Right lobe of liver (tissue), 6 donors: ENCODE measurements at regions of chr16 and their contacts with region 1.

Region 1: DNA sequence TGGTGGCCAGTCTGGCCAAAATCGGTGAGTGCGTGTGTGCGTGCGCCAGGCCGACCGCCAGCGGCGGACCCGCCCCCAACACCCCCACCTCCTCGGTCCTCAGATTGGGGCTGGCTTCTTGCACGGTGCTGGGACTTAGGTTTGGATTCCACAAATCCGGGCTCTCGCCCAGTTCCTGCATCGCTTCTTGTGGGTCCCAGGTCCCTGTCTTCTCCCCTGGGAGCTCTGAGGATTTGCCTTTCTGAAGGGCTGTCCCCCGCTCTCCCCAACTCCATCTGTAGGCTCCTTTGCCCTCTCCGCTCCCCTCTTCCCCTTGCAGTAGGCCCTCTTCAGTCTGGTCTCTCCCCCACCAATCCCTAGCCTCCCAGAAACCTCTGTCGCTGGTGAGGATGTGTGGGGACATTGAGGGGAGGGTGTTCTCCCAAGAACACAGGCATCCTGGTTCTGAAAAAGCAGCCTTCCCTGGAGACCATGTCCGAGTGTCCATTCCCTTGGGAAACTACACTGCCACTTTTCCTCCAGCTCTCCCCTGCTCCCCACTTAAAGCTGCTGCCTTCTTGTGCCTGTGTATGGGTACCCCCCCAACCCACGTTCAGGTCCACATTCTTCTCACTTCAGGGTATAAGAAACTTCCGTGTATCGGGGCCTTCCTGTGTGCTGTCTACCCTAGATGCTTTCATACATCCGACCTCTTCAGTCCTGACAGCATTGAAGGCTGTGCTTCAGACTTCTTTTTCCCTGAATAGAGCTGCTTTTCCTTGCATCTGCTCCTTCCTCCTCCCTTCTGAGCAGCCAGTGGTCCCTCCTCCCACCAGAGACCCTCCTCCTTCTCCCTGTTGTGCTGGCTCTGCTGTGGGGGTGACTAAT is 632 bp downstream of the SLC9A5 start:
- DNase-seq: peak in 2 of 3 donors; percentile 7 to 47
- ATAC-seq: no peak
- H3K4me3 ChIP-seq: peak overlapping the region; percentile 33 to 34 (median 33)
- H3K27ac ChIP-seq: no peak overlapping the region
- H3K4me1 ChIP-seq: peaks cover 0 to 42% (median 0%) of the 10 kb centered on the region in 4 donors
- H3K27me3 ChIP-seq: peaks cover 0 to 10% of the 10 kb centered on the region in 2 donors
- CTCF ChIP-seq: no peak
- POLR2A ChIP-seq: no peak

Region 2: GRCh38 chr16:67137605-67138004 is 111.8 kb before region 1 on chr16:
- intact Hi-C with region 1: no loop called
- DNase-seq: no peak
- ATAC-seq: peak; percentile 26 to 58 (median 48)
- H3K4me3 ChIP-seq: no peak overlapping the region
- H3K27ac ChIP-seq: no peak overlapping the region
- H3K4me1 ChIP-seq: no peaks in the 10 kb centered on the region
- H3K27me3 ChIP-seq: no peaks in the 10 kb centered on the region
- CTCF ChIP-seq: no peak
- POLR2A ChIP-seq: no peak

Region 3: GRCh38 chr16:67197486-67198113 is 51.8 kb before region 1 on chr16:
- intact Hi-C with region 1: no loop called
- DNase-seq: no peak
- ATAC-seq: no peak
- H3K4me3 ChIP-seq: no peak overlapping the region
- H3K27ac ChIP-seq: no peak overlapping the region
- H3K4me1 ChIP-seq: peaks cover 0 to 23% (median 5%) of the 10 kb centered on the region in 4 donors
- H3K27me3 ChIP-seq: no peaks in the 10 kb centered on the region
- CTCF ChIP-seq: no peak
- POLR2A ChIP-seq: no peak

Region 4: GRCh38 chr16:67207857-67208519 is 41.4 kb before region 1 on chr16:
- intact Hi-C with region 1: no loop called
- DNase-seq: no peak
- ATAC-seq: no peak
- H3K4me3 ChIP-seq: no peak overlapping the region
- H3K27ac ChIP-seq: no peak overlapping the region
- H3K4me1 ChIP-seq: peaks cover 0 to 14% (median 0%) of the 10 kb centered on the region in 4 donors
- H3K27me3 ChIP-seq: no peaks in the 10 kb centered on the region
- CTCF ChIP-seq: no peak
- POLR2A ChIP-seq: no peak

Region 5: DNA sequence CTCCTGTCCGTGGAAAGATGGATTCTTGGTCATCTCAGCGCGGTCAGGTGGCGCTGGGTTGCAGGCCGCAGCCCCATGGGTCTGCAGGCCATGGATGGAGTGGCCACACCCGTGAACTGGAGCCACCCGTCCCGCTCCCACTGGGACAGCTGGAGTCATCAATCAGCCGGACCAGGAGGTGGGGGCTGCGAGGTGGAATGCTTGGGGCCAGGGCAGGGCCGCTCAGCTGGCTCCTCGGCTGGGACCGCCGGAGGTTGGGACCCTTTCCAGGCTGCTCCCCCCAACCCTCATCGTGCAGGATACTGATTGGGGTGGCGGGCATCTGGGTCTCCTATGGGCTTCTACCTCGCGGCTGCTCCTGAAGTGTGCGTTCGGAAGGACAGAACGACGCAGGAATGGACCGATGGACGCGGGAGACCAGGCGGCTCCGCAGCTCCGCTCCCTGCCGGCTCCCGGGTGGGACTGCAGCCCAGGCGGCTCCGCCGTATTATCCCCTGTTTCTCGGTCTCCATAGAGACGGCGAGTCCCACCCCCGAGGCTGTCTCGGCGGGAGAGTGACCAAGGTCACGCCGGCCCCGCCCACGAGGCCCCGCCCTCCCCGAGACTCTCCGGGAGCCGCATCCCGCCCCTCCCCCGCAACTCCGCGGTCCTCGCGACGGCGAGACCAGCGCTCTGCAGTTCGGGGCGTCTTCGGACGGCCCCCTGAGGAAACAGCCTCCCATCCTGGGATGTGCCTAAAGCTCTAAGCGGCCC is 143.8 kb after region 1 on chr16 and contains the start of gene TPPP3:
- intact Hi-C with region 1: loop called in 1 of 2 experiments (anchors 10 kb)
- DNase-seq: peak; percentile 71 to 77 (median 75)
- ATAC-seq: peak; percentile 65 to 74 (median 68)
- H3K4me3 ChIP-seq: peak within 1 kb of the TSS in 1 of 3 donors; percentile 6
- H3K27ac ChIP-seq: peak within 1 kb of the TSS in 1 of 3 donors; percentile 19
- H3K4me1 ChIP-seq: peaks cover 0 to 5% (median 0%) of the 10 kb centered on the region in 4 donors
- H3K27me3 ChIP-seq: no peaks in the 10 kb centered on the region
- CTCF ChIP-seq: peak; percentile 40 to 49 (median 46)
- POLR2A ChIP-seq: no peak
- total RNA-seq, gene TPPP3: 0.24 to 0.65 (median 0.37) TPM in 5 of 6 experiments, not detected in the other